Naive thymus-derived CD8-positive, alpha-beta T cell (primary cell): ENCODE measurements at regions of chr19 and their contacts with region 1.

Region 1: DNA sequence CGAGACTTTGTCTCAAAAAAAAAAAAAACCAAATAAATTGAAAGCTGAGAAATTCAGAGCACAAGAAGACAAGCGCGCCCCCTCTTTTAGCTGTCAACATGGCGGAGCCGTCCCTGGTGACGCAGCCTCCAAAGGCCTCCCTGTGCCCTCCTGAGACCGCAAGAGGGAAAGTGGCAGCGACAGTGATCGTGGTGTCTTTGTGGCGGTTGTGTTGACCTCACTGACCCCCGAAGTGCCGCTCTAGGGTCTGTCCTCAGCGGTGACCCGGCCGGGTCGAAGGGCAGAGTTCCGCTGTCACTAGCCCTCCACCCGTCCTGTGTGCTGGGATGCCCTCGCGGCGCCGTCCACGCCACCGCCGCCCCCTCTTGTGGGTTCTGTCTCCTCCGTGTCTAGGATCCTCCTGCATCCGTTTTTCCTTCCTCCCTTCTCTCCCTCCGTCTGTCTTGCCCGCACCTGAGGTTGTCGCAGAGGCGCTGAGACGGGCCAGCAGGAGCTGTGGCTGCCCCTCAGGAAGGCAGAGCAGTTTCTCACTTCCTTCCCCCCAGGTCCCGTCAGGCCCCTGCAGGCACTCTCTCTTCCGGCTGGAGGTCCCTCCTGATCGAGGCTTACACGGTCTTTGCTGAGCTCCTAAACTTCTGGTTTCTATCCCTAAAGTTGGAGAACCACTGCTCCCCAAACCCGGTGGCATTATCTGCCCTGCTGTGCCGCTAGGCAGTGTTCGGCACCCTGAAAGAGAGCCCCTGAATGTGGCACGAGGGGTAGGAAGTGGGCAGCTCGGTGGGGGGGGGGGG is 7.2 kb downstream of the UHRF1 start:
- DNase-seq: peak; percentile 36 to 77 (median 58)
- ATAC-seq: peak; percentile 59 to 64
- H3K4me3 Mint-ChIP-seq: peak overlapping the region; percentile 97 to 100 (median 100)
- H3K27ac Mint-ChIP-seq: peak overlapping the region; percentile 97 to 100 (median 99)
- H3K4me1 Mint-ChIP-seq: peaks cover 19 to 55% (median 42%) of the 10 kb centered on the region in 4 donors
- H3K27me3 Mint-ChIP-seq: no peaks in the 10 kb centered on the region

Region 2: GRCh38 chr19:4867534-4868285 is 48.8 kb before region 1 on chr19 and contains the start of gene PLIN3:
- POLR2A ChIA-PET with region 1: interaction called, 53 read pairs
- DNase-seq: peak; percentile 76 to 92 (median 80)
- ATAC-seq: peak; percentile 89 to 90
- H3K4me3 Mint-ChIP-seq: peak within 1 kb of the TSS; percentile 72 to 90 (median 82)
- H3K27ac Mint-ChIP-seq: peak within 1 kb of the TSS; percentile 26 to 82 (median 70)
- H3K4me1 Mint-ChIP-seq: peaks cover 8 to 18% (median 15%) of the 10 kb centered on the region in 4 donors
- H3K27me3 Mint-ChIP-seq: peaks cover 0 to 1% (median 0%) of the 10 kb centered on the region in 5 donors
- polyA plus RNA-seq, gene PLIN3: 14.1 to 17.3 (median 15.2) TPM